ENCODE measurements at regions of chrX and their contacts with region 1.

Region 1: GRCh38 chrX:1481636-1482529 is 29.2 kb upstream of the ASMTL start:
- DNase-seq: peak; percentile 98
- H3K4me3 ChIP-seq: peak overlapping the region; percentile 54
- H3K27ac ChIP-seq: peak overlapping the region; percentile 100
- H3K4me1 ChIP-seq: peaks cover 96% of the 10 kb centered on the region
- CTCF ChIP-seq: no peak

Region 2: GRCh38 chrX:1491851-1492349 is 10.0 kb after region 1 on chrX:
- CTCF ChIA-PET with region 1: no interaction called
- POLR2A ChIA-PET with region 1: no interaction called
- intact Hi-C with region 1: loop called (anchors 1 kb)
- DNase-seq: peak; percentile 97
- H3K4me3 ChIP-seq: peak overlapping the region; percentile 73
- H3K27ac ChIP-seq: peak overlapping the region; percentile 88
- H3K4me1 ChIP-seq: peaks cover 60% of the 10 kb centered on the region
- CTCF ChIP-seq: no peak

Region 3: GRCh38 chrX:1521459-1521956 is 39.6 kb after region 1 on chrX:
- CTCF ChIA-PET with region 1: no interaction called
- POLR2A ChIA-PET with region 1: no interaction called
- intact Hi-C with region 1: loop called (anchors 1 kb)
- DNase-seq: peak; percentile 99
- H3K4me3 ChIP-seq: peak overlapping the region; percentile 58
- H3K27ac ChIP-seq: peak overlapping the region; percentile 91
- H3K4me1 ChIP-seq: peaks cover 67% of the 10 kb centered on the region
- CTCF ChIP-seq: no peak

Region 4: GRCh38 chrX:1807301-1807731 is 325.4 kb after region 1 on chrX:
- CTCF ChIA-PET with region 1: no interaction called
- POLR2A ChIA-PET with region 1: no interaction called
- intact Hi-C with region 1: no loop called
- DNase-seq: no peak
- H3K4me3 ChIP-seq: no peak overlapping the region
- H3K27ac ChIP-seq: no peak overlapping the region
- H3K4me1 ChIP-seq: no peaks in the 10 kb centered on the region
- CTCF ChIP-seq: no peak

Measured in OCI-LY7 (cell line).